ENCODE measurements at regions of chr13 and their contacts with region 1.

Region 1: DNA sequence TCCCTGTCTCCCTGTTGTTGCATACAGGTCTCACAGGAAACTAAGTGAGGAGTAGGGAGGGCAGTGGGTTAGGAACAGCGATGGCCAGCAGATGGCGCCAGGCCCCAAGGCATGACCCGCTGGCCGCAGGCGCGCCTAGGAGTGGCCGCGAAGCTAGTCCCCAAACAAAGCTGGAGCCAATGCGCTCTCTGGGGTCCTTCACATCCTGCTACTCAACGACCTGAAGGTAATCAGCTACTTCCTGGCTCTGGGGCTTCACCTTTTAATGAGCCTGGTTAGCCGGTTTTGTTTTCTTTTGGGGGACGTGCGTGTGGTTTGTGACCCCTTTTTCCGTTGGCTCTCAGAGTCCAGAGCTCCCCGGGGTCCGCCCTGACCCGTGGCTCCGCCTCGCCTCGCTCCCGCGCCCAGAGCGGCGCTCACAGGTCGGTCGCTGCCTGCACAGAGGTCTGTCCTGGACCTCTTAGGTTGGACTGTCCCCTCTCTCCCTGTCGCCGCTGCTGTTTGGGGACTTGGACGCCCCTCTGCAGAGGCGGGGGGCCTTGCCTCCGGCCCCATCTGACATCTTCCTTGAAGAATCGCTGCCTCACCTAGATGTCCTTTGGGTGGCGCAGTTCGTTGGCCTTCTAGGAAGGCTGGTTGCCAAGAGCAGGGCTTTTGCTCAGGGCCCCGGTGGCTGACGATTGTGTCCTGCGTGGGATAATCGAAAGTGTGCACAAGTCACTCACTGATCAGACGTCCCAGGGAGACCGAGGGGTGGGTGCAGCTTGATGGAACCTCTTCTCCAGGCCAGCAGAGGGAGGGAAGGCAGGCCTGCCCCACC is 62.1 kb upstream of the GTF3A start:
- DNase-seq: peak; percentile 95
- ATAC-seq: peak; percentile 93
- H3K4me3 Mint-ChIP-seq: peak overlapping the region; percentile 80
- H3K27ac Mint-ChIP-seq: no peak overlapping the region
- H3K4me1 Mint-ChIP-seq: peaks cover 24% of the 10 kb centered on the region
- H3K27me3 Mint-ChIP-seq: no peaks in the 10 kb centered on the region; the same call in none of the 2 replicates
- CTCF ChIP-seq: peak; percentile 88

Region 2: GRCh38 chr13:26977556-26977955 is 384.7 kb before region 1 on chr13:
- CTCF ChIA-PET with region 1: interaction called, 22 read pairs
- POLR2A ChIA-PET with region 1: interaction called, 5 read pairs
- DNase-seq: no peak
- ATAC-seq: no peak
- H3K4me3 Mint-ChIP-seq: no peak overlapping the region
- H3K27ac Mint-ChIP-seq: no peak overlapping the region
- H3K4me1 Mint-ChIP-seq: peaks cover 13% of the 10 kb centered on the region
- H3K27me3 Mint-ChIP-seq: no peaks in the 10 kb centered on the region
- CTCF ChIP-seq: no peak

Region 3: DNA sequence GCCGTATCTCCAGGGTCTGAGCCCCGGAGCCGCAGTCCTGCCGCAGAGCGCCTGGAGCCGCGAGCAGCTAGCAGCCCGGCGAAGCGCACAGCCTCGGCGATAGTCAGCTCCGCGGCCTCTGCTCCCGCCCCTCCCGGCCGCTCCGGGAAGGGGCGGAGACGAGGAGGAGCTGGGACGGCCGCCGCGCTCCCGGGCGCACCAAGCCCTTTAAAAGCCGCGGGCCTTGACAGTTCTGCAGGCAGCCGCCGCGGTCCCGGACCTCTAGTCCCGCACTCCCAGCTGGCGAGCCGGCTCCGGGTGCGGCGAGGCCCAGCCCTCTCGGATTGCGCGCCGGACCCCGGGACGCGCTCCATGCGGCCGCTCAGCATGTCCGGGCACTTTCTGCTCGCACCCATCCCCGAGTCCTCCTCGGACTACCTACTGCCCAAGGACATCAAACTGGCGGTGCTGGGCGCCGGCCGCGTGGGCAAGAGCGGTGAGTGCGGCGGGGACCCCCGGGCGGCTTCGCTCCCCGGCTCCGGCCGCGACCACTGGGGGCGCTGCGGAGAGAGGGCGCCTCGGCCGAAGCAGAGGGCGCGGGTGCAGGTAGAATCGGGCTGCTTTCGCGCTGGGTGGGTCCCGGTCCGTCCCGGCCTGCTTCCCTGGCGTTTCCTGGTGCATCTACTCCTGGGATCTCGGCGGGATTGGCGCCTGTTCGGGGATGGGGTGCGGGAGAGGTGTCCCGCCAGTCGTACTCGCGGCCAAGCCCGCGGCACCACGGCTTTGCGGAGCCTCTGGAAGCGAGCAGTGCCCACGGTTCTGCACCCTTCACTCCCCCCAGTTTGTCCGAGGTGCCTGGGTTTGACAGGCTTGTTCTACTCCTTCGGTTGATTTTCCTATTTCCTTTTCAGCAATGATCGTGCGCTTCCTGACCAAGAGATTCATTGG is 91.4 kb before region 1 on chr13 and contains the start of gene RASL11A:
- CTCF ChIA-PET with region 1: interaction called, 19 read pairs
- POLR2A ChIA-PET with region 1: no interaction called
- DNase-seq: peak; percentile 87
- ATAC-seq: peak; percentile 90
- H3K4me3 Mint-ChIP-seq: peak within 1 kb of the TSS; percentile 89
- H3K27ac Mint-ChIP-seq: peak within 1 kb of the TSS; percentile 92; the same call in 1 of the 2 replicates
- H3K4me1 Mint-ChIP-seq: peaks cover 15% of the 10 kb centered on the region
- H3K27me3 Mint-ChIP-seq: peaks cover 45% of the 10 kb centered on the region
- CTCF ChIP-seq: peak; percentile 91
- total RNA-seq, gene RASL11A: 2.5 to 3.8 TPM (median 3.5 TPM) in 3 replicates

Region 4: GRCh38 chr13:27374650-27375049 is 12.4 kb after region 1 on chr13:
- CTCF ChIA-PET with region 1: interaction called, 94 read pairs
- POLR2A ChIA-PET with region 1: interaction called, 4 read pairs
- DNase-seq: peak; percentile 66
- ATAC-seq: peak; percentile 88
- H3K4me3 Mint-ChIP-seq: no peak overlapping the region
- H3K27ac Mint-ChIP-seq: no peak overlapping the region
- H3K4me1 Mint-ChIP-seq: peaks cover 22% of the 10 kb centered on the region
- H3K27me3 Mint-ChIP-seq: peaks cover 15% of the 10 kb centered on the region
- CTCF ChIP-seq: peak; percentile 24; the same call in 1 of the 2 replicates

Region 5: DNA sequence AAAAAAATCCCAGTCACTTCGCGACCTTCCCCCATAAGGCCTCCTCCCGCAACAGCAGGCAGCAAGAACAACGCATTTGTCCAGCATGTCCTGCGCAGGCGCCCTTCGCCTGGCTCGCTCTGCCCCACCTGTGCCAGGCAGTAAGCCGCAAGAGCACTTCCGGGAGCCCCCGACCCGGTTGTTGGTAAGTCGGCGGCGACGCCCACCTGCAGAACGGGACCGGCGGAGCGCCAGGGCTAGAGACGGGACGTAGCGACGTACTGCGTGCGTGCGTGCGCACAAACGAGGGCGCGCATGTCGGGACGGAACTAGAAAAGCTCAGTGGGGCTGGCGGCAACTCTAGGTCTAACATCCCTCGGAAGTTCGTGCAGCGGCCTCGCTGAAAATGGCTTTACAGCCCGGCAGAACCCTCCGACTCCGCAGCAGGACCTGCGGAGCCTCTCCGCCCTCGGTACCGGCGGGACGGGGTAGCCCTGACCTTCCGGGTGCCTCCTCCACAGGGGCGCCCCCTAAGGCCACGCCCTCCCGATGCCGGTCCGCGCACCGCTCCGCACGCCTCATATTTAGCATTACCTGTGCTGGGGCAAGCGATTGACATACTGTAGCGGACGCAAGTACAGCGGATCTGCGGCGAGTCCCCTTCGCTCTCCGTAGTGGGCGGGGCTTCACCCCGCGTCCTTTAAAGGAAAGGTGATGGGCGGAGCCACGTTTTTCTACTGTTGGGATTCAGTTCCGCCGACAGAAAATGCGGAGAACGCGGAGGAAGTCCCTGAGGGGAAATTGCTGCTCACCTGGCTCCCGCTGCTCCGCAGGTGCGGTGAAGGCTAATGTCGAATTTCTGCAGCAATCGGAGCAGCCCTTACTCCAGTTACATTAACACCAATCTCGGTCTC is 87.9 kb after region 1 on chr13 and contains the start of gene MTIF3:
- CTCF ChIA-PET with region 1: interaction called, 12 read pairs
- POLR2A ChIA-PET with region 1: no interaction called
- DNase-seq: peak; percentile 96
- ATAC-seq: peak; percentile 91
- H3K4me3 Mint-ChIP-seq: peak within 1 kb of the TSS; percentile 90
- H3K27ac Mint-ChIP-seq: peak within 1 kb of the TSS; percentile 96
- H3K4me1 Mint-ChIP-seq: peaks cover 24% of the 10 kb centered on the region
- H3K27me3 Mint-ChIP-seq: peaks cover 2% of the 10 kb centered on the region; the same call in 1 of the 2 replicates
- CTCF ChIP-seq: no peak
- total RNA-seq, gene MTIF3: 42.0 to 50.0 TPM (median 45.1 TPM) in 3 replicates

Region 6: GRCh38 chr13:27783111-27783510 is 420.8 kb after region 1 on chr13:
- CTCF ChIA-PET with region 1: interaction called, 11 read pairs
- POLR2A ChIA-PET with region 1: no interaction called
- DNase-seq: peak; percentile 38
- ATAC-seq: peak; percentile 96
- H3K4me3 Mint-ChIP-seq: no peak overlapping the region
- H3K27ac Mint-ChIP-seq: no peak overlapping the region
- H3K4me1 Mint-ChIP-seq: peaks cover 16% of the 10 kb centered on the region
- H3K27me3 Mint-ChIP-seq: peaks cover 82% of the 10 kb centered on the region
- CTCF ChIP-seq: no peak

Measured in WTC11 (cell line).